ENCODE measurements at regions of chr1 and their contacts with region 1.

Region 1: DNA sequence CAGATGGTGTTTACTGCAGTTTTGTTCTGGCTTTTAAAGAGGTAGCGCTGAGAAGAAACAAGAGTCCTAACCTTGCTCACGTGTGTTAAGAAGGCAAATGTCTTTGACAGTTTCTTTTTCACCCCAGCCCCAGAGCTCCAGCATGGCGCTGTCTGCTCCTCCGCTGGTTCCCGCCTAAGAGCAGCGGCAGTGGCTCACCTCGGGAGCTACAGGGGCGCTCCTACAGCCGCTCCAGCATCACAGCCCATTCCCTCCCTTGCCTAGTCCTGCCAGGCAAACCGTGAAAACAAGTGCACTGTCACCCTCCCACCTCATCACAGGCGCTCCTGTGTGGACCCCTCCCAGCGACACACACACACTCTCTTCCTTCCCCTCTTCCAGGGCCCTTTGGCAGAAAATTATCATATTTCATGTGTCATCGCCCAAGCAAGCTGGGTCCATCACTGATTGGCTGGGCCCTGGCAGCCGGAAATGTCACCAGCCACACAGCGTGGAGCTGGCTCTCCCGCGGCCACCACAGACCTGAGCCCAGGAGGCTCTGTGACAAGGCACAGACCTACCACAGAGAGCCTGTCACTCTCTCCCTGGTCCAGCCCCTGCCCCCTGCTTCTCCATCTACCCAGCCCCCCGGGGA is 1.2 kb upstream of the HIVEP3 start:
- DNase-seq: peak; percentile 55
- H3K4me3 ChIP-seq: peak overlapping the region; percentile 76
- H3K27ac ChIP-seq: peak overlapping the region; percentile 81
- H3K4me1 ChIP-seq: peaks cover 52% of the 10 kb centered on the region
- H3K27me3 ChIP-seq: no peaks in the 10 kb centered on the region
- CTCF ChIP-seq: no peak

Region 2: DNA sequence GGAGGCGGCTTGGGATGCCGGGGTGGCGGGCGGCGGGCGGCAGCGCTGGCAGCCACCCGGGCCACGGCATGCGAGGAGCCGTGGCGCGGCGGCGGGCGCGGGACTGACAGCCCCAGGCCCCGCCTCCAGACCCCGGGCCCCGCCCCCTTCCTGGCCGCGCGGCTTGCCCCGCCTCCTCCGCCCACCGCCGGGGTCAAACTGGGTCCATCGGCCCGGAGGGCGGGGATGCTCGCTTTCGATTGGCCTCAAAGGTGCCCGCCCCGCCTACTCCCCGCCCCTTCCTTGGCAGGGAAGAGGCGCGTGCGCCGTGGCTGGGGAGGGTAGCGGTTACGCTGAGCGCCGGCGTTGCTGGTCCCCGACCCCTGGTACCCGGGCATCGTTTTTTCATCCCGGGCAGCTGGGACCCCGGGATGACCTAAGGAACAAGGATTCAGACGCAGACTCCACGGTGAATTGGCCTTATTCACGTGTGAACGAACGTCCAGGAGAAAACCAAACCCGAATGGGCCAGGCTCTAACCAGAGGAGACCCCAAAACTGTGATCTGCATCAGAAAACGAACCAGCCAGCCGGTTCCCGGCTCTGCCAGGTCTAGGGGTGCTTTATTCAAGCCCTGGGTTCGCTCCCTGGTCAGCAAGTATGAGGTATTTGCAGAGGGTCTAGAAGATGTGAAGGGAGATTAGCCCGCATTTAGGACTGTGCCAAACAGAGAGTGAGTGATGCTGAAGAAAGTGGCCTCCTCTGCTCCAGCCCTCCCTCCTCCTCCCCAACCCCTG is 116.1 kb after region 1 on chr1:
- intact Hi-C with region 1: loop called (anchors 10 kb)
- DNase-seq: peak; percentile 98
- H3K4me3 ChIP-seq: peak overlapping the region; percentile 87
- H3K27ac ChIP-seq: peak overlapping the region; percentile 83
- H3K4me1 ChIP-seq: peaks cover 22% of the 10 kb centered on the region
- H3K27me3 ChIP-seq: no peaks in the 10 kb centered on the region
- CTCF ChIP-seq: no peak